Endothelial cell of umbilical vein (primary cell): ENCODE measurements at regions of chr13 and their contacts with region 1.

Region 1: GRCh38 chr13:107450931-107451330 is 764.4 kb downstream of the LIG4 start:
- DNase-seq: peak; percentile 99
- H3K4me3 ChIP-seq: no peak overlapping the region
- H3K27ac ChIP-seq: peak overlapping the region; percentile 99
- H3K4me1 ChIP-seq: peaks cover 23% of the 10 kb centered on the region
- H3K27me3 ChIP-seq: no peaks in the 10 kb centered on the region
- CTCF ChIP-seq: peak in 1 of 2 donors; percentile 12
- POLR2A ChIP-seq: peak; percentile 74

Region 2: DNA sequence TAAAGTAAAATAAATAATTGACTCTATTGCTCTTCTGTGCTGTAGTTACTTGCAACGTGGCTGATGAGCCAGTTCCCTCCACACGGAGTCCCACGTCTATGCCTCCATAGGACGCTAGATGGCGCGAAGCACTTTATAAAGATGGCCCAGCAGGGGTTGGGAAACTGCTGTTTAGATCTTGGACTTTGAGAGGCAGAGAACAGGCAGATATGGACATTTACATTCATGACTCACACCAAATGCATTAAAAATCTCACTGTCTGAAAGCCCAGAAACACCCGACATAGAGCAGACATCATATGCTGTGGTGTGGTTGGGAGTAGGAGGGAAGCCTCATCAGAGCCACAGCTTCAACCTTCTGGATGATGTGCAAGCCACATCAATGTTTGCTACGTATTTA is 239.9 kb before region 1 on chr13:
- CTCF ChIA-PET with region 1: no interaction called
- POLR2A ChIA-PET with region 1: no interaction called
- dilution Hi-C with region 1: no loop called
- intact Hi-C with region 1: loop called (anchors 2 kb)
- DNase-seq: peak; percentile 92
- H3K4me3 ChIP-seq: no peak overlapping the region
- H3K27ac ChIP-seq: no peak overlapping the region
- H3K4me1 ChIP-seq: peaks cover 13% of the 10 kb centered on the region
- H3K27me3 ChIP-seq: no peaks in the 10 kb centered on the region
- CTCF ChIP-seq: peak; percentile 84 to 92
- POLR2A ChIP-seq: no peak

Region 3: GRCh38 chr13:107373551-107373950 is 77.4 kb before region 1 on chr13:
- CTCF ChIA-PET with region 1: interaction called, 6 read pairs
- POLR2A ChIA-PET with region 1: no interaction called
- dilution Hi-C with region 1: no loop called
- intact Hi-C with region 1: loop called (anchors 1 kb)
- DNase-seq: peak; percentile 91
- H3K4me3 ChIP-seq: no peak overlapping the region
- H3K27ac ChIP-seq: no peak overlapping the region
- H3K4me1 ChIP-seq: peaks cover 36% of the 10 kb centered on the region
- H3K27me3 ChIP-seq: no peaks in the 10 kb centered on the region
- CTCF ChIP-seq: peak; percentile 59 to 63
- POLR2A ChIP-seq: no peak

Region 4: GRCh38 chr13:107466326-107467099 is 15.6 kb after region 1 on chr13:
- CTCF ChIA-PET with region 1: interaction called, 3 read pairs
- POLR2A ChIA-PET with region 1: no interaction called
- dilution Hi-C with region 1: no loop called
- intact Hi-C with region 1: loop called (anchors 2 kb)
- DNase-seq: peak; percentile 80
- H3K4me3 ChIP-seq: no peak overlapping the region
- H3K27ac ChIP-seq: no peak overlapping the region
- H3K4me1 ChIP-seq: peaks cover 7% of the 10 kb centered on the region
- H3K27me3 ChIP-seq: no peaks in the 10 kb centered on the region
- CTCF ChIP-seq: no peak
- POLR2A ChIP-seq: no peak

Region 5: GRCh38 chr13:107650081-107650701 is 199.3 kb after region 1 on chr13:
- CTCF ChIA-PET with region 1: no interaction called
- POLR2A ChIA-PET with region 1: interaction called, 3 read pairs
- dilution Hi-C with region 1: no loop called
- intact Hi-C with region 1: loop called (anchors 1 kb)
- DNase-seq: peak; percentile 78
- H3K4me3 ChIP-seq: no peak overlapping the region
- H3K27ac ChIP-seq: no peak overlapping the region
- H3K4me1 ChIP-seq: peaks cover 4% of the 10 kb centered on the region
- H3K27me3 ChIP-seq: no peaks in the 10 kb centered on the region
- CTCF ChIP-seq: peak; percentile 82 to 93
- POLR2A ChIP-seq: no peak